B cell (primary cell): ENCODE measurements at regions of chr2 and their contacts with region 1.

Region 1: DNA sequence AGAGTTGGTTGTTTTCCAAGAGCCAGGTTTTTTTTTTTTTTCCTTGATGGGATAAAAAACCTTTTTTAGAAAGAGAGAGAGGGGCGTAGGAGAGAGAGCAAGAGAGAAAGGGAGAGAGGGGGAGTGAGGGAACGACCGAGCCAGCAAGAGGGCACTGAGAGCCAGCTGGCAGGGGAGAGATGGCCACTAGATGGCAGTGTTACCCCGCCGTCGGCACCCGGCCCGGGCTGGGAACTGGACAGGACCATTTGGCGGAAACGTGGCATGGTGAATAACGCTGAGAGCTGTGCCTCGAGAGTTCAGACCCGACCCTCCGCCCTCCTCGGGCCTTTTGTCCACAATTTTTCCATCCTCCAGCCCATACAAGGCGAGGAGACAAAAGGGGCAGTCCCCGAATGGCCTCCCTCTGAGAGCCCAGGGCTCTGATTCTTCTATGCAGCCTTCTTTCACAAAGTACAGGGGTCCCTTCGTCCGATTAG is 286.7 kb upstream of the VRK2 start:
- DNase-seq: peak; percentile 77
- ATAC-seq: peak; percentile 87
- H3K4me3 ChIP-seq: peak overlapping the region in 3 of 5 experiments; percentile 40 to 55 (median 50)
- H3K4me3 Mint-ChIP-seq: peak overlapping the region; percentile 72
- H3K27ac ChIP-seq: no peak overlapping the region
- H3K27ac Mint-ChIP-seq: no peak overlapping the region
- H3K4me1 ChIP-seq: peaks cover 15 to 20% of the 10 kb centered on the region in 2 donors
- H3K4me1 Mint-ChIP-seq: peaks cover 19% of the 10 kb centered on the region
- H3K27me3 ChIP-seq: no peaks in the 10 kb centered on the region
- H3K27me3 Mint-ChIP-seq: no peaks in the 10 kb centered on the region
- CTCF ChIP-seq: peak; percentile 99

Region 2: GRCh38 chr2:58240670-58241545 is 481.0 kb after region 1 on chr2 and contains the start of gene FANCL:
- CTCF ChIA-PET with region 1: no interaction called
- POLR2A ChIA-PET with region 1: no interaction called
- intact Hi-C with region 1: loop called (anchors 10 kb)
- DNase-seq: peak; percentile 85
- ATAC-seq: peak; percentile 82
- H3K4me3 ChIP-seq: peak within 1 kb of the TSS; percentile 86 to 97 (median 87)
- H3K4me3 Mint-ChIP-seq: peak within 1 kb of the TSS; percentile 96
- H3K27ac ChIP-seq: peak within 1 kb of the TSS; percentile 70 to 74
- H3K27ac Mint-ChIP-seq: peak within 1 kb of the TSS; percentile 90
- H3K4me1 ChIP-seq: peaks cover 12 to 15% of the 10 kb centered on the region in 2 donors
- H3K4me1 Mint-ChIP-seq: peaks cover 38% of the 10 kb centered on the region
- H3K27me3 ChIP-seq: no peaks in the 10 kb centered on the region
- H3K27me3 Mint-ChIP-seq: no peaks in the 10 kb centered on the region
- CTCF ChIP-seq: no peak
- total RNA-seq, gene FANCL: 23.3 and 31.7 TPM in 2 replicates

Region 3: DNA sequence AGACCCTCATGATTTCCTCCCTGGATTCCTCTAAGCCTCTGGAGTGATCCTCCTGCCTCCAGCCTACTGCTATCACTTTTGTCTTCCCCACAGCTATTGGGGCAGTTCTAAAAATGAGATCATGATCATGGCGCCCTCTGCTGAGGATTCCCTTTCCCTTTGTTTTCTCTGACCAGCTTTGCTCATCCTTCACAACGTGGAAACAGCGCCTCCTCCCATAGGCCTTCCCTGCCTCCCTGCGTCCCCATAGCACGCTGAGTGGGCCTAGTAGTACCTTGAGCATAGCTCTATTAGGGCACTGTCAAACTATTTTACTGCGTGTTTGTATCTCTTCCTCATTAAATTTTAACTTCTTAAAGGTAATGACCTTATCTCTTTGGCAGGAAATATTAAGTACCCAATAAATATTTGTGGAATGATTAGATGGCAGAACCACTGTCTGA is 688.2 kb after region 1 on chr2:
- CTCF ChIA-PET with region 1: interaction called, 7 read pairs
- POLR2A ChIA-PET with region 1: no interaction called
- intact Hi-C with region 1: loop called (anchors 5 kb)
- DNase-seq: peak; percentile 38
- ATAC-seq: no peak
- H3K4me3 ChIP-seq: no peak overlapping the region
- H3K4me3 Mint-ChIP-seq: no peak overlapping the region
- H3K27ac ChIP-seq: no peak overlapping the region
- H3K27ac Mint-ChIP-seq: no peak overlapping the region
- H3K4me1 ChIP-seq: no peaks in the 10 kb centered on the region
- H3K4me1 Mint-ChIP-seq: peaks cover 2% of the 10 kb centered on the region
- H3K27me3 ChIP-seq: no peaks in the 10 kb centered on the region
- H3K27me3 Mint-ChIP-seq: no peaks in the 10 kb centered on the region
- CTCF ChIP-seq: no peak

Region 4: GRCh38 chr2:58762176-58762781 is 1002.4 kb after region 1 on chr2:
- CTCF ChIA-PET with region 1: interaction called, 3 read pairs
- POLR2A ChIA-PET with region 1: no interaction called
- intact Hi-C with region 1: loop called (anchors 1 kb)
- DNase-seq: peak; percentile 65
- ATAC-seq: peak; percentile 74
- H3K4me3 ChIP-seq: no peak overlapping the region
- H3K4me3 Mint-ChIP-seq: no peak overlapping the region
- H3K27ac ChIP-seq: no peak overlapping the region
- H3K27ac Mint-ChIP-seq: no peak overlapping the region
- H3K4me1 ChIP-seq: peaks cover 7 to 8% of the 10 kb centered on the region in 2 donors
- H3K4me1 Mint-ChIP-seq: peaks cover 8% of the 10 kb centered on the region
- H3K27me3 ChIP-seq: no peaks in the 10 kb centered on the region
- H3K27me3 Mint-ChIP-seq: peaks cover 4% of the 10 kb centered on the region
- CTCF ChIP-seq: peak; percentile 82

Region 5: DNA sequence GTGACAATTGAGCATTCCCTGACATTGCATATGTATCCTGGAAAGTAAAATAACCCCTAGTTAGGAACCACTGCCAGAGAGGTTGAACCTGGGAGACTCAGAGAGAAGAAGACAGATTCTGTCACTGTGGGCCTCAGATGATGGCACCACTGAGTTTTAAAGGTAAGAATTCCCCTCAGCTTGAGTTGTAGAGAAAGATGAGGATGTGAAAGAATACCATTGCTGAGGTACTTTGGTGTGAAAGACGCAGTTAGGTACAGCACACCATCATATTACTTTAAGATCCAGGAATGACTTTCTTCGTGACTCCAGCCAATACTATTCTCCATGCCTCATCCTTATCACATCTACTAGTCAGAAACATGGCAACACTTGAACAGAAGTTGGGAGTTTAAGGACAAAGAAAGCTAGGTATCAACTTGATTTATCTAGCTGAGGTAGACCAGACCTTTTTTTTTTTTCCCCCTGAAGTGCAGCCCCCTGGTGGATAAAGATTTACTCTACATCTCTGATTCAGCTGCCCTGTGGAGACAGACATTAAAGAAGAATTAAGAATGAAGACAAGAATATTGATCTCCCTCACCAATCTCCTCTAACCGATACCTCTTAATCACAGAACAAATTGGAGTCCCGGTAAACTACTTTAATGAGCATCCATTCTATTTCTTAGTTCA is 1111.7 kb after region 1 on chr2:
- CTCF ChIA-PET with region 1: interaction called, 4 read pairs
- POLR2A ChIA-PET with region 1: no interaction called
- intact Hi-C with region 1: loop called (anchors 5 kb)
- DNase-seq: peak; percentile 5
- ATAC-seq: no peak
- H3K4me3 ChIP-seq: no peak overlapping the region
- H3K4me3 Mint-ChIP-seq: no peak overlapping the region
- H3K27ac ChIP-seq: no peak overlapping the region
- H3K27ac Mint-ChIP-seq: no peak overlapping the region
- H3K4me1 ChIP-seq: no peaks in the 10 kb centered on the region
- H3K4me1 Mint-ChIP-seq: peaks cover 2% of the 10 kb centered on the region
- H3K27me3 ChIP-seq: no peaks in the 10 kb centered on the region
- H3K27me3 Mint-ChIP-seq: peaks cover 4% of the 10 kb centered on the region
- CTCF ChIP-seq: peak; percentile 17